Heart left ventricle (tissue), 16 donors: ENCODE measurements at regions of chr12 and their contacts with region 1.

Region 1: GRCh38 chr12:109844983-109845823 is 12.0 kb upstream of the TRPV4 start:
- DNase-seq: peak; percentile 77 to 94 (median 86)
- ATAC-seq: peak; percentile 85 to 96 (median 96)
- H3K4me3 ChIP-seq: peak overlapping the region in 6 of 12 donors; percentile 14 to 41 (median 34)
- H3K27ac ChIP-seq: peak overlapping the region in 1 of 12 donors; percentile 67
- H3K4me1 ChIP-seq: peaks cover 0 to 24% (median 0%) of the 10 kb centered on the region in 12 donors
- H3K27me3 ChIP-seq: no peaks in the 10 kb centered on the region
- CTCF ChIP-seq: peak; percentile 95 to 99 (median 98)
- POLR2A ChIP-seq: no peak

Region 2: GRCh38 chr12:109597795-109598427 is 247.3 kb before region 1 on chr12:
- intact Hi-C with region 1: loop called in 1 of 10 experiments (anchors 5 kb)
- DNase-seq: peak; percentile 86 to 93 (median 90)
- ATAC-seq: peak; percentile 84 to 90 (median 88)
- H3K4me3 ChIP-seq: no peak overlapping the region
- H3K27ac ChIP-seq: no peak overlapping the region
- H3K4me1 ChIP-seq: peaks cover 0 to 18% (median 6%) of the 10 kb centered on the region in 12 donors
- H3K27me3 ChIP-seq: peaks cover 0 to 2% (median 0%) of the 10 kb centered on the region in 9 donors
- CTCF ChIP-seq: peak; percentile 92 to 98 (median 96)
- POLR2A ChIP-seq: no peak

Region 3: GRCh38 chr12:109793826-109794501 is 51.2 kb before region 1 on chr12:
- intact Hi-C with region 1: no loop called
- DNase-seq: peak in 1 of 5 donors; percentile 2
- ATAC-seq: no peak
- H3K4me3 ChIP-seq: no peak overlapping the region
- H3K27ac ChIP-seq: no peak overlapping the region
- H3K4me1 ChIP-seq: no peaks in the 10 kb centered on the region
- H3K27me3 ChIP-seq: no peaks in the 10 kb centered on the region
- CTCF ChIP-seq: no peak
- POLR2A ChIP-seq: no peak

Region 4: DNA sequence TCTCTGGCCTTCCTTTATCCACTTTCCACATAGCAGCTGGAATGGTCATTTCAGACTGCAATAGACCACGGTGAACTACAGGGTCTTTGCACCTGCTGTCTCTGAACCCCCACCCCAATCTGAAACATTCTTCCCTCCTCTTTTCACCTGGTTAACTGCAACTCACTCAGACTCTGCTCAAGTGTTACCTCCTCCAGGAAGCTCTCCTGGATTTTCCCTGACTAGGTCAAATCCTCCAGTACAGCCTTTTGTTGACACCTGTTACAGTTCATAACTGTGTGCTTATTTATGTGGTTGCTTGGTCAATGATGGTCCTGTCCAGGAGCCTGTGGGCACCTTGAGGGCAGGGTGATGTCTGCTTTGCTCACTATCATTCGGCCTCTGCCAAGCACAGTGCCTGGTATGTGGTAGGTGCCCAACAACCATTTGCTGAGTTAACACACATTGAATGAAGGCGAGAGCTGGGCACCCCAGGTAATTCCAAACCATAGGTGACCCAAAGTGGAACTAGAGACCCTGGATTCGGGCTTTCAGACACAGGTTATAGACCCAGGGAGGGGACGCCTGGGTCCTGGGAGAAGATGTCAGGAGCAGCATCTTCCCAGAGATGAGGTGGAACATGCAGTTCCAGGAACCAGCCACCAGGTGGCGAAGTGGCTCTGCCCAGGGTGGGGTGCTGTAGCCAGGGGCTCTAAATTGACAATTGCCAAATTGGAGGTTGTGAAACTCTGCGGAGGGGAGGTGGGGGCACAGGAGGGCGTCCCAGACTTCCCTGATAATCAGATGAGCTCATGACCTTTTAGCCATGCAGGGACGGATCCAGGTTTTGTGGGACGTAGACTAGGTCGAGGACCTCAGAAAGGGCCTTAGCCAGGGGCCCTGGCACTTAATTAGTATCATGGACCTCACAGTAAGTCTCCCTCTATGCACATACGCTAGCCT is 40.1 kb before region 1 on chr12:
- intact Hi-C with region 1: loop called (anchors 1 to 5 kb)
- DNase-seq: peak; percentile 50 to 83 (median 64)
- ATAC-seq: peak; percentile 62 to 86 (median 82)
- H3K4me3 ChIP-seq: no peak overlapping the region
- H3K27ac ChIP-seq: no peak overlapping the region
- H3K4me1 ChIP-seq: peaks cover 0 to 2% (median 0%) of the 10 kb centered on the region in 12 donors
- H3K27me3 ChIP-seq: no peaks in the 10 kb centered on the region
- CTCF ChIP-seq: peak; percentile 91 to 99 (median 98)
- POLR2A ChIP-seq: no peak

Region 5: GRCh38 chr12:110048242-110049027 is 203.2 kb after region 1 on chr12 and contains the start of gene C12orf76:
- intact Hi-C with region 1: no loop called
- DNase-seq: peak; percentile 94 to 96 (median 96)
- ATAC-seq: peak; percentile 95 to 99 (median 98)
- H3K4me3 ChIP-seq: peak within 1 kb of the TSS; percentile 59 to 99 (median 84)
- H3K27ac ChIP-seq: peak within 1 kb of the TSS in 11 of 12 donors; percentile 33 to 87 (median 72)
- H3K4me1 ChIP-seq: peaks cover 0 to 30% (median 16%) of the 10 kb centered on the region in 12 donors
- H3K27me3 ChIP-seq: no peaks in the 10 kb centered on the region
- CTCF ChIP-seq: peak in 1 of 12 donors; percentile 5
- POLR2A ChIP-seq: peak in 1 of 2 donors; percentile 62
- total RNA-seq, gene C12orf76: 3.5 to 13.3 (median 4.7) TPM